Gastrocnemius medialis (tissue), 4 donors: ENCODE measurements at regions of chr7 and their contacts with region 1.

Region 1: GRCh38 chr7:66075590-66076461 is at the start of gene ASL:
- DNase-seq: peak; percentile 85 to 89
- ATAC-seq: peak; percentile 93 to 94
- H3K4me3 ChIP-seq: peak within 1 kb of the TSS; percentile 67 to 91 (median 82)
- H3K27ac ChIP-seq: peak within 1 kb of the TSS; percentile 62 to 78 (median 73)
- H3K4me1 ChIP-seq: peaks cover 12% of the 10 kb centered on the region in 2 donors
- H3K27me3 ChIP-seq: no peaks in the 10 kb centered on the region
- CTCF ChIP-seq: peak in 1 of 5 experiments; percentile 13
- POLR2A ChIP-seq: peak; percentile 80 to 96
- total RNA-seq, gene ASL: 2.5 to 8.7 (median 4.9) TPM

Region 2: GRCh38 chr7:66114793-66115649 is 39.2 kb after region 1 on chr7 and contains the start of gene CRCP:
- in situ Hi-C with region 1: no loop called
- intact Hi-C with region 1: loop called (anchors 1 kb)
- DNase-seq: peak; percentile 68 to 78
- ATAC-seq: peak; percentile 91 to 94
- H3K4me3 ChIP-seq: peak within 1 kb of the TSS; percentile 89 to 98 (median 95)
- H3K27ac ChIP-seq: peak within 1 kb of the TSS; percentile 96 to 99 (median 98)
- H3K4me1 ChIP-seq: peaks cover 27 to 45% of the 10 kb centered on the region in 2 donors
- H3K27me3 ChIP-seq: no peaks in the 10 kb centered on the region
- CTCF ChIP-seq: peak in 2 of 5 experiments; percentile 11 to 18
- POLR2A ChIP-seq: peak; percentile 43 to 69
- total RNA-seq, gene CRCP: 19.2 to 21.3 (median 20.4) TPM

Region 3: DNA sequence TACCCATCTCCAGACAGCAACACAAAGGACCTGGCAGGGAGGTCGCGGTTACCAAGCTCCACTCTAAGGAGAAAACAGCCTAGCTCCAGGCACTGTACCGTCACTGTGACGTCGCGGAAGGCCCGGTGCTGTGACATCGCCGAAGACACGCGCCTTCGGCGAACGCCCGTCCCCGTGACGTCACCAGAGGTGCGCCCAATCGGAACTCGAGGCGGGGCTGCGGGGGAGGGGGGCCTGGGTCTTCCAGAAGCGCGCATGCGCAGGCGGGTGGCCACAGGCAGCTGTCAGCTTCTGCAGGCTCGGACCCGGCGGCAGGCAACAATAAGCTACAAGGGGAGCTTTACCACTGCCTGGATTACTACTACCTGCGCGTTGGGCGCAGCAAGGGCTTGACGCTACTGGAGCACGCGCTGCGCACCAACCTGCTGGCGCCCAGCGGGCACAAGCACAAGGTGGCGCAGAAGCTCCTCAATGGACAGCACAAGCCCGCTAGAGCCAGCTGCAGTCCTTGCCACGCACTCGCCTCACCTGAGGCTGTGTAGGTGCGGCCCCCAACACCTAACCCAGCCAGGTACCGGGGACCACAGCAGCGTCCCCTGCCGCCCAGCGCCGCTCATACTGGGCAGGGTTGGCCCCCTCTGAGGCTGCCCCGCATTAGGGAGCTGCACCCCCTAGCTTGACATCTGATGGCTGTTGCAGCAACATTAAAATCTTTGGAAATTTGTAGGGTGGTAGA is 337.7 kb after region 1 on chr7:
- in situ Hi-C with region 1: no loop called
- intact Hi-C with region 1: loop called (anchors 5 kb)
- DNase-seq: peak; percentile 28 to 62
- ATAC-seq: peak; percentile 75 to 83
- H3K4me3 ChIP-seq: peak overlapping the region; percentile 57 to 80 (median 58)
- H3K27ac ChIP-seq: peak overlapping the region; percentile 38 to 72 (median 60)
- H3K4me1 ChIP-seq: peaks cover 0 to 7% of the 10 kb centered on the region in 2 donors
- H3K27me3 ChIP-seq: no peaks in the 10 kb centered on the region
- CTCF ChIP-seq: peak in 4 of 5 experiments; percentile 10 to 32 (median 30)
- POLR2A ChIP-seq: no peak